B cell (primary cell): ENCODE measurements at regions of chr1 and their contacts with region 1.

Region 1: GRCh38 chr1:161045750-161046571 is at the start of gene USF1:
- DNase-seq: peak; percentile 98
- ATAC-seq: peak; percentile 67
- H3K4me3 ChIP-seq: peak within 1 kb of the TSS; percentile 67 to 100 (median 95)
- H3K4me3 Mint-ChIP-seq: peak within 1 kb of the TSS; percentile 99
- H3K27ac ChIP-seq: peak within 1 kb of the TSS; percentile 99
- H3K27ac Mint-ChIP-seq: peak within 1 kb of the TSS; percentile 100
- H3K4me1 ChIP-seq: peaks cover 43 to 67% of the 10 kb centered on the region in 2 donors
- H3K4me1 Mint-ChIP-seq: peaks cover 67% of the 10 kb centered on the region
- H3K27me3 ChIP-seq: no peaks in the 10 kb centered on the region
- H3K27me3 Mint-ChIP-seq: no peaks in the 10 kb centered on the region
- CTCF ChIP-seq: no peak
- total RNA-seq, gene USF1: 192 and 196 TPM in 2 replicates

Region 2: DNA sequence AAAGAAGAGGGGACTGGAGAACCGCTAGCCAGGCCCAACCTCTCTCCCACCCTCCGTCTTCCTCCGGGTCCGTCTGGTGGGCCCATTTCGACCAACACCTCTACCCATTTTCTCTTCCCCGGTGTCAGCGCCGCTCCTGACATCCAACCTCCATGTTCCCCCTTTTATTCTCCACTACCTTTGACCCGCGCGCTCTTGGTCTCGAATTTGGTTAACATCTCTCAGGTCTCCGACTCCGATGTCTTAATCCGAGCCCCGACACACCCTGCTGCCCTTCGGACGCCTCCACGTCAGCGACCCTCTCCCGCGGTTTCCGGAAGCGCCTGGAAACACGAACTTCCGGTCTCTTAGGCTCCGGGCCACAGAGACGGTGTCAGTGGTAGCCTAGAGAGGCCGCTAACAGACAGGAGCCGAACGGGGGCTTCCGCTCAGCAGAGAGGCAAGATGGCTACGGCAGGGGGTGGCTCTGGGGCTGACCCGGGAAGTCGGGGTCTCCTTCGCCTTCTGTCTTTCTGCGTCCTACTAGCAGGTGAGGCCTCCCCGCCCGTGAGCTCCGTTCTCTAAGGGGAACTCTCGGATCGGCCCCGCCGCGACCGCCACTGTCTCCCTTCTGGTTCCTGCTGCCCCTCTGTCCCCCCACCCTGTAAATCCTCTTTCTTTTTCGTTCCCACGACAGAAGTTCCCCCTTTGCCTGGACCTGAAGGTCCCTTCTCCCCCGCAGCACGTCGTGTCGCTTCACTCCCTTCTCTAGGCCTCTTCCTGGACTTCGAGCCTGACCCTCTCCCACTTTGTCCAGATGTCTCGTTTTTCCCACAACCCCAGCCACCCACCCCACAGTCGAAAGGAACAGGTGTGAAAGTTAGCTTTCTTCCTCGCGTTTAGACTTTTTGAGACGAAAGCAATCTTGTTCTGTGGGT is 702.8 kb before region 1 on chr1 and contains the starts of genes COPA and NCSTN:
- CTCF ChIA-PET with region 1: no interaction called
- POLR2A ChIA-PET with region 1: no interaction called
- intact Hi-C with region 1: loop called (anchors 10 kb)
- DNase-seq: peak; percentile 97
- ATAC-seq: peak; percentile 91
- H3K4me3 ChIP-seq: peak within 1 kb of the TSS; percentile 90 to 100 (median 98)
- H3K4me3 Mint-ChIP-seq: peak within 1 kb of the TSS; percentile 99
- H3K27ac ChIP-seq: peak within 1 kb of the TSS; percentile 89 to 95
- H3K27ac Mint-ChIP-seq: peak within 1 kb of the TSS; percentile 99
- H3K4me1 ChIP-seq: peaks cover 46 to 54% of the 10 kb centered on the region in 2 donors
- H3K4me1 Mint-ChIP-seq: peaks cover 71% of the 10 kb centered on the region
- H3K27me3 ChIP-seq: no peaks in the 10 kb centered on the region
- H3K27me3 Mint-ChIP-seq: no peaks in the 10 kb centered on the region
- CTCF ChIP-seq: no peak
- total RNA-seq, gene COPA: 168 and 180 TPM in 2 replicates
- total RNA-seq, gene NCSTN: 95.1 and 110 TPM in 2 replicates

Region 3: GRCh38 chr1:160997323-160998038 is 48.5 kb before region 1 on chr1:
- CTCF ChIA-PET with region 1: interaction called, 43 read pairs
- POLR2A ChIA-PET with region 1: interaction called, 11 read pairs
- intact Hi-C with region 1: loop called (anchors 10 kb)
- DNase-seq: peak; percentile 69
- ATAC-seq: peak; percentile 82
- H3K4me3 ChIP-seq: no peak overlapping the region
- H3K4me3 Mint-ChIP-seq: no peak overlapping the region
- H3K27ac ChIP-seq: peak overlapping the region; percentile 15 to 51
- H3K27ac Mint-ChIP-seq: peak overlapping the region; percentile 68
- H3K4me1 ChIP-seq: peaks cover 0 to 5% of the 10 kb centered on the region in 2 donors
- H3K4me1 Mint-ChIP-seq: peaks cover 4% of the 10 kb centered on the region
- H3K27me3 ChIP-seq: no peaks in the 10 kb centered on the region
- H3K27me3 Mint-ChIP-seq: no peaks in the 10 kb centered on the region
- CTCF ChIP-seq: peak; percentile 52

Region 4: GRCh38 chr1:161021165-161021960 is 24.6 kb before region 1 on chr1:
- CTCF ChIA-PET with region 1: interaction called, 22 read pairs
- POLR2A ChIA-PET with region 1: interaction called, 20 read pairs
- intact Hi-C with region 1: loop called (anchors 1 kb)
- DNase-seq: peak; percentile 92
- ATAC-seq: peak; percentile 93
- H3K4me3 ChIP-seq: peak overlapping the region; percentile 50 to 83 (median 81)
- H3K4me3 Mint-ChIP-seq: peak overlapping the region; percentile 96
- H3K27ac ChIP-seq: peak overlapping the region; percentile 55 to 85
- H3K27ac Mint-ChIP-seq: peak overlapping the region; percentile 91
- H3K4me1 ChIP-seq: peaks cover 22 to 23% of the 10 kb centered on the region in 2 donors
- H3K4me1 Mint-ChIP-seq: peaks cover 26% of the 10 kb centered on the region
- H3K27me3 ChIP-seq: no peaks in the 10 kb centered on the region
- H3K27me3 Mint-ChIP-seq: no peaks in the 10 kb centered on the region
- CTCF ChIP-seq: no peak

Region 5: GRCh38 chr1:161098210-161099068 is 52.5 kb after region 1 on chr1 and contains the start of gene KLHDC9:
- CTCF ChIA-PET with region 1: interaction called, 55 read pairs
- POLR2A ChIA-PET with region 1: interaction called, 21 read pairs
- intact Hi-C with region 1: loop called (anchors 1 kb)
- DNase-seq: peak; percentile 87
- ATAC-seq: peak; percentile 80
- H3K4me3 ChIP-seq: peak within 1 kb of the TSS; percentile 51 to 71 (median 60)
- H3K4me3 Mint-ChIP-seq: peak within 1 kb of the TSS; percentile 94
- H3K27ac ChIP-seq: peak within 1 kb of the TSS; percentile 45 to 57
- H3K27ac Mint-ChIP-seq: peak within 1 kb of the TSS; percentile 96
- H3K4me1 ChIP-seq: peaks cover 16 to 31% of the 10 kb centered on the region in 2 donors
- H3K4me1 Mint-ChIP-seq: peaks cover 33% of the 10 kb centered on the region
- H3K27me3 ChIP-seq: no peaks in the 10 kb centered on the region
- H3K27me3 Mint-ChIP-seq: no peaks in the 10 kb centered on the region
- CTCF ChIP-seq: no peak
- total RNA-seq, gene KLHDC9: 1.6 and 4.2 TPM in 2 replicates

Region 6: GRCh38 chr1:161153679-161154426 is 107.9 kb after region 1 on chr1 and contains the start of gene UFC1:
- CTCF ChIA-PET with region 1: interaction called, 3 read pairs
- POLR2A ChIA-PET with region 1: interaction called, 6 read pairs
- intact Hi-C with region 1: loop called (anchors 1 kb)
- DNase-seq: peak; percentile 94
- ATAC-seq: peak; percentile 97
- H3K4me3 ChIP-seq: peak within 1 kb of the TSS; percentile 88 to 100 (median 90)
- H3K4me3 Mint-ChIP-seq: peak within 1 kb of the TSS; percentile 97
- H3K27ac ChIP-seq: peak within 1 kb of the TSS; percentile 95 to 98
- H3K27ac Mint-ChIP-seq: peak within 1 kb of the TSS; percentile 99
- H3K4me1 ChIP-seq: peaks cover 15 to 17% of the 10 kb centered on the region in 2 donors
- H3K4me1 Mint-ChIP-seq: peaks cover 26% of the 10 kb centered on the region
- H3K27me3 ChIP-seq: no peaks in the 10 kb centered on the region
- H3K27me3 Mint-ChIP-seq: no peaks in the 10 kb centered on the region
- CTCF ChIP-seq: no peak
- total RNA-seq, gene UFC1: 78.1 and 91.0 TPM in 2 replicates